HAP-1 (cell line): ENCODE measurements at regions of chr19 and their contacts with region 1.

Region 1: DNA sequence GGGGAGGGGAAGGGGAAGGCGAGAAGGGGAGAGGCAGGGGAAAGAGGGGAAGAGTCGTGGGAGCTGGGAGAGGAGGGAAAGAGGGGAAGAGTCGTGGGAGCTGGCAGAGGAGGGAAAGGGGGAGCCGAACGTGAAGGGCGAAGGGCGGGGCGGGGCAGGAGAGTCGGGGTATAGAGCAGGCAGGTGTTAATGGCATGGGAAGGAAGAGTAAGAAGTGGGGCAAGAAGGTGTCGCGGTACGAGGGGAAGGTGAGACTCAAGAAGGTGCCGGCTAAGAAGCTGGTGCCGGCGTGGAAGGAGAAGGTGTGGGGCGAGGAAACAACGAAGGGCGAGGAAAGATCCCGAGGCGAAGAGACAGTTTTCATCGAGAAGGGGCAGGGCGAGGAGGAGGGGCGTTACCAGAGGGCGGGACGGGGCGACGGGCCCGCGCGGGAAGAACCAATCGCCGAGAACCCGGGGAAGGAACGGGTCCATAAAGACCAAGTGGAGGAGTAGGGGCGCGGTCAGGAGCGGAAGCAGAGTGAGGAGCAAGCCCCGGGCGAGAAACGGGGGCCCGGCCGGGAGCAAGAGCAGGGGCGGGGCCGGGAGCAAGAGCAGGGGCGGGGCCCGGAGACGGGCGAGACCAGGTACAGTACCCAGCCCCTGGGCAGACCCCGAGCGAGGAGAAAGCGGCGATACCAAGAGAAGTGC is 463 bp downstream of the CATSPERG start:
- DNase-seq: peak; percentile 97 to 99
- H3K4me3 ChIP-seq: peak overlapping the region; percentile 49
- H3K4me1 ChIP-seq: peaks cover 25% of the 10 kb centered on the region
- H3K27me3 ChIP-seq: no peaks in the 10 kb centered on the region

Region 2: GRCh38 chr19:37893845-37894575 is 442.1 kb before region 1 on chr19:
- in situ Hi-C with region 1: loop called (anchors 10 kb)
- DNase-seq: no peak
- H3K4me3 ChIP-seq: no peak overlapping the region
- H3K4me1 ChIP-seq: no peaks in the 10 kb centered on the region
- H3K27me3 ChIP-seq: no peaks in the 10 kb centered on the region

Region 3: DNA sequence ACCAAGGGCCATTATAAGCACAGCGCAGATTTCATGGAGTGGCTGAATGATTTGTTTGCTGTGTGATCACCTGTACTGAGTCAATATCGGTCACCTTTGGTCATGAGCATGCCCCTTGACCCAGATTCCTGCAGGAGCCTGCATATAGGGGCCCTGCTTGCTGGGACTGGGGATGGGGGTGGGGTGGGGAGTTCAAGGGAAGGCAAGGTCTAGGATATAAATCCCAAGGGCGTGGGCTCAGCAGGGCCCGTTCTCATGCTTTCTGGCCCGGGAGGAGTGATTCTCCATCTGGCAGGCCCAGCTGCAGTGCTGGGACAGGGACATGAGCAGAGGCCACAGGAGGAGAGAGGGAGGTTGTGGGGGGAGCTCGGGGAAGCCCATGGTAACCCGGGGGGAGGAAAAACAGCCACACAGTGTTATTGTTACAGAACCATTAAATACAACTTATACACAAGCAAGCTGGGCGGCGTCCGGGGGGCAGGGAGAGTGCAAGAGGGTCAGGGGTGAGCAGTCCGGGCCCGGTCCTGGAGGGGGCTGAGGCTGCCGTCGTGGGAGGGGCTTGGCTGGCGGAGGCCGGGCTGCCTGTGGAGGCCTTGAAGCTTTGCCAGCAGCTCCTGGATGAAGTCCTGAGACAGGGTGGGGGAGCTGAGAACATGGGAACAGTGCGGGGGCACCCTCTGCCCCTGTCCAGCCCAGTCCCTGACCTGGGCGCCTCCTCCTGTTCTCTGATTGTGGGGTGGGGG is 85.1 kb before region 1 on chr19:
- in situ Hi-C with region 1: no loop called
- DNase-seq: no peak
- H3K4me3 ChIP-seq: no peak overlapping the region
- H3K4me1 ChIP-seq: peaks cover 17% of the 10 kb centered on the region
- H3K27me3 ChIP-seq: no peaks in the 10 kb centered on the region